Left ventricle myocardium superior (tissue), 1 donor: ENCODE measurements at regions of chr11 and their contacts with region 1.

Region 1: GRCh38 chr11:17384002-17384511 is 4.4 kb downstream of the KCNJ11 start:
- DNase-seq: peak; percentile 82
- ATAC-seq: peak; percentile 44

Region 2: GRCh38 chr11:17502630-17503029 is 118.6 kb after region 1 on chr11:
- intact Hi-C with region 1: loop called (anchors 2 kb)
- DNase-seq: no peak
- ATAC-seq: no peak